Sigmoid colon (tissue), 7 donors: ENCODE measurements at regions of chr16 and their contacts with region 1.

Region 1: GRCh38 chr16:23952128-23952970 is 116.6 kb downstream of the PRKCB start:
- DNase-seq: no peak
- H3K4me3 ChIP-seq: peak overlapping the region in 3 of 4 donors; percentile 13 to 20 (median 19)
- H3K27ac ChIP-seq: peak overlapping the region in 3 of 4 donors; percentile 45 to 71 (median 62)
- H3K4me1 ChIP-seq: peaks cover 0 to 36% (median 30%) of the 10 kb centered on the region in 4 donors
- H3K27me3 ChIP-seq: no peaks in the 10 kb centered on the region
- CTCF ChIP-seq: no peak
- EP300 ChIP-seq: no peak
- POLR2A ChIP-seq: no peak

Region 2: DNA sequence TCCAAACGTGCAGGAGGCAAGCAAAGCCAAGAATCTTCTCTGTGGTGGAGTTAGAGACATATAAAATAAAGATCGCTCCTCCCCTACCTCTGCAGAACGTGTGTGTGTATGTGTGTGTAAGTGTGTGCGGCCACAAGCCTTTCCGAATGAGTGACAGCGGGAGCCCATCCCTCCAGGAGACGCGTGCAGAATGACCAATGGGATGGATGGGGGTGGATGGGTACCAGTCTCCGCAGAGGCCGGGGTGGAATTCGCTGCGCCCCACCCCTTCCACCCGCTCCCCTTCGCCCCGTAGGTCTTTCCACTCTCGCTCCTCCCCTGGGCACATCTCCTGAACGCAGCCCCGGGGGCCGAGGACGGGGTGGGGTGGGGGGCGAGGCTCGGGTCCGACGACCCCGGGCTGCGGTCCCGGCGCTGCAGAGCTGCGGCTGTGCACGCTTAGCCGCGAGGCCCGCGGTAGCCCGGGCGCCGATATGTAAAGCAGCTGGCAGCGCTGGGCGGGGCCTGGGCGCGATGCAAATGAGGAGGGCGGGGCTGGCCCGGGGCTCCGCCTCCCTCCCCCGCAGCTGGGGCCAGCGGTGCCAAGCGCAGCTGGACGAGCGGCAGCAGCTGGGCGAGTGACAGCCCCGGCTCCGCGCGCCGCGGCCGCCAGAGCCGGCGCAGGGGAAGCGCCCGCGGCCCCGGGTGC is 116.8 kb before region 1 on chr16 and contains the start of gene PRKCB:
- intact Hi-C with region 1: loop called (anchors 2 kb)
- DNase-seq: peak; percentile 89
- H3K4me3 ChIP-seq: peak within 1 kb of the TSS; percentile 56 to 83 (median 70)
- H3K27ac ChIP-seq: peak within 1 kb of the TSS in 3 of 4 donors; percentile 58 to 72 (median 60)
- H3K4me1 ChIP-seq: peaks cover 0 to 24% (median 18%) of the 10 kb centered on the region in 4 donors
- H3K27me3 ChIP-seq: no peaks in the 10 kb centered on the region
- CTCF ChIP-seq: no peak
- EP300 ChIP-seq: no peak
- POLR2A ChIP-seq: no peak
- total RNA-seq, gene PRKCB: 12.1 to 43.8 (median 23.8) TPM

Region 3: DNA sequence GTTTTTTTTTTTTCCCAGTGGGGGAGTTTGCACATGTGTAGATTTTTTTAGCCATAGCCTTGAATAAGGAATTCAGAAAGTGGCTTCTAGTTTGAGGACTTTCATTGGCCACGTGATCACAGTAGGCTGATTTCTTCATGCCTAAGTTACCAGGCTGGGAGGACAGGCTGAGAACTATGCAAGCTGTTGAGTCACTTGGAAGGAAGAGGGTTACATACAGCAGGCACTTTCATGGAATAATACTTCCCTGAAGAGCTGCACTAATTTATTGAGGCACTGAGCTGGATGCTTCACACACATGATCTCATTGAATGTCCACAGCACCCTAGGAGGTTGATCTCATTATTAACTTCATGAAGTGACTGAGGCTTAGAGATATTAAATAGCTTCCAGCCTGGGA is 93.8 kb before region 1 on chr16:
- intact Hi-C with region 1: loop called (anchors 5 kb)
- DNase-seq: no peak
- H3K4me3 ChIP-seq: no peak overlapping the region
- H3K27ac ChIP-seq: peak overlapping the region in 2 of 4 donors; percentile 49 to 64
- H3K4me1 ChIP-seq: peaks cover 0 to 60% (median 37%) of the 10 kb centered on the region in 4 donors
- H3K27me3 ChIP-seq: no peaks in the 10 kb centered on the region
- CTCF ChIP-seq: no peak
- EP300 ChIP-seq: no peak
- POLR2A ChIP-seq: no peak

Region 4: DNA sequence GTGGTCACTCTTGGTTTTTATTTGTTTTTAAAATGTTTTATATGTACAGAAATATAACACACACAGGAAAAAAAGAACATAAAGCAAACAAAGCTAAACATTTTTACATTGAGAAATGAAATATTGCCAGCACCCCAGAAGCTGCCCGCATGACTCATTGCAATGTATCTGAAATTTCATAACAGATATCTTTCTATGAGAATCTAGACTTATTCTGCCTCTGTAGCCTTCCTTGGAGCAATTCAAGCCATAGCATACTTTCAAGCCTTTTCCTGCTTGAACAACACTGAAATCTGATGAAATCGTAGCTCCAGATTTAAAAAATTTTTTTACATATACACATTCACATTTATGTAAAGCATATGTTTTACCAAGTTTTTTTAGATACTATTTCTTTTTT is 673.9 kb after region 1 on chr16:
- intact Hi-C with region 1: no loop called
- DNase-seq: no peak
- H3K4me3 ChIP-seq: no peak overlapping the region
- H3K27ac ChIP-seq: no peak overlapping the region
- H3K4me1 ChIP-seq: no peaks in the 10 kb centered on the region
- H3K27me3 ChIP-seq: no peaks in the 10 kb centered on the region
- CTCF ChIP-seq: no peak
- EP300 ChIP-seq: no peak
- POLR2A ChIP-seq: no peak